Natural killer cell (primary cell): ENCODE measurements at regions of chr6 and their contacts with region 1.

Region 1: DNA sequence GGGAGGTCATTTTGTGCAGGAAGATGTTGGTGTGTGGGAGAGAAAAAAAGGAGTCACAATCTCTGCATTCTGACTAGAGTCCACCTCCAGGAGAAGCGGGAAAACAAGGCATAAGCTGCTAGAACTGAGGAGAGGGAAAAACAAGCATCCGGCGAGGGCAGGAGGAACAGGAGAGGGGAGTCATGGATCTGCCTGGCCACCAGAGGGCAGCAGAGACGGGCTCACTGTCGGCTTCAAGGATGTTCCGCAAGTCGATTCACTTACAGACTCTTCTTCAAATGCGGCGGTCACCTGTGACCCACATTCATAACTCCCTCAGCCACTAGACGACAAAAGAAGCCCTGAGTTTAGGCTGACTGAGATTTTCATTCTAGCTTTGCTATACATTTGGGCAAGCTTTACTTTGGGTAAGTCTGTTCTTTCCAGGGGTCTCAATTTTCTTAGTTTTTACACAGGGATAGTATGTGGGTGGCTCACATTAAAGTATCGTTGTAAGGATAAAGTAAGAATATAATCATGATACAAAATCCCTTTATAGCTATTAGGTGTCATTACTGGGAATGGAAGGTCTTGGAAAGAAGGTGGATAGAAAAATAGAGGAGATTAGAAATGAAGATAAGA is 6.6 kb upstream of the BTNL2 start:
- DNase-seq: peak; percentile 81 to 93
- ATAC-seq: peak; percentile 89 to 92 (median 91)
- H3K4me3 ChIP-seq: no peak overlapping the region
- H3K4me3 Mint-ChIP-seq: no peak overlapping the region
- H3K27ac ChIP-seq: no peak overlapping the region
- H3K27ac Mint-ChIP-seq: no peak overlapping the region
- H3K4me1 ChIP-seq: no peaks in the 10 kb centered on the region
- H3K4me1 Mint-ChIP-seq: peaks cover 11 to 12% of the 10 kb centered on the region in 2 donors
- H3K27me3 ChIP-seq: peaks cover 19% of the 10 kb centered on the region
- H3K27me3 Mint-ChIP-seq: peaks cover 45 to 60% of the 10 kb centered on the region in 2 donors
- CTCF ChIP-seq: peak; percentile 95

Region 2: DNA sequence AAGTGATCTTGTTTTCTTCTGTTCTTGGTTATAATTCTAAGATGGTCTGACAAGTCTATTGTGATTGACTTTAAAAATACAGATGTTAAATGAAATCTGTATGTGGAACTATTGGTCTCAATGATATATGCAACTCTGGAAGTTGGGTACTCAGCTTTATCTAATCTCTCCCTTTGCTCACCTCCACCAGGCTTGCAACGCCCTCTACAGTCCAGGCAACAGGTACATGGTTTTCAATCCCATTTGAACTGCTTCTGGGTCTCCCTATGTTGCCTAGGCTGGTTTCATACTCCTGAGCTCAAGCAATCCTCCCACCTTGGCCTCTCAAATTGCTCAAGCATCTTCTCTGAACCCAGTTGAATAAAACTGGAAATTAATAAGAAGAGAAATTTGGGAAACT is 278.5 kb after region 1 on chr6:
- intact Hi-C with region 1: loop called (anchors 2 kb)
- DNase-seq: peak; percentile 31 to 82
- ATAC-seq: peak in 2 of 3 donors; percentile 74 to 94
- H3K4me3 ChIP-seq: no peak overlapping the region
- H3K4me3 Mint-ChIP-seq: no peak overlapping the region
- H3K27ac ChIP-seq: no peak overlapping the region
- H3K27ac Mint-ChIP-seq: no peak overlapping the region
- H3K4me1 ChIP-seq: peaks cover 4% of the 10 kb centered on the region
- H3K4me1 Mint-ChIP-seq: peaks cover 10% of the 10 kb centered on the region in 2 donors
- H3K27me3 ChIP-seq: no peaks in the 10 kb centered on the region
- H3K27me3 Mint-ChIP-seq: peaks cover 24 to 47% of the 10 kb centered on the region in 2 donors
- CTCF ChIP-seq: peak; percentile 63

Region 3: DNA sequence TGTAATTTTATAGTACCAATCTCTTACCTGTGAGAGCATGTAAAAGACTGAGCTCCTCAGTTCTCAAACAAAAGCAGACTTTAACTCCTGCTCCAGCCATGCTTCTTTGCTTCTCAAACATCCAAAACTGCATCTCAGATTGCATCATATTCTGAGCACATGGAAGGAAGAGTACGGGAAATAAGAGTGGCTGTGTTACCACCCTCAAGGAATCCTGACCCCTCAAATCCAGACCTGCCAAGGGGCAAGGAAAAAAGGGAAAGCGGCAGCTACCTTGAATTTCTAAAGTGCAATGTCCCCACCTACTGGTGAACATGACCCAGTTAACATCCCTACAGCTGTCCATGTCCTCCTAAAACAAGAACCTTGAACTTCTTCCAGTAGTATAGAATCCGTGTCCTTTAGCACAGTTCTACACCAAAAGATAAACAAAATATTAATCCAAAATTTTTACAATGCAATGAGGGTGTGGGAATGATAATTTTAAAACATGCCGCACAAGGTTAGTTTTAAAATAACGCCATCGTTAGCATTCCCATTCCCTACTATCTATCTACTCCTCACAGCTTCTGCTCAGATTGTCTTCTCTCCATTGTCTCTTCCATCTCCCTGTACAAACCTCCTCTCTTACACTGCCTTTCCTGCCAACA is 287.0 kb after region 1 on chr6:
- intact Hi-C with region 1: loop called (anchors 1 kb)
- DNase-seq: peak in 1 of 2 donors; percentile 76
- ATAC-seq: peak; percentile 56 to 75 (median 58)
- H3K4me3 ChIP-seq: no peak overlapping the region
- H3K4me3 Mint-ChIP-seq: no peak overlapping the region
- H3K27ac ChIP-seq: no peak overlapping the region
- H3K27ac Mint-ChIP-seq: no peak overlapping the region
- H3K4me1 ChIP-seq: peaks cover 2% of the 10 kb centered on the region
- H3K4me1 Mint-ChIP-seq: peaks cover 0 to 7% of the 10 kb centered on the region in 2 donors
- H3K27me3 ChIP-seq: peaks cover 8% of the 10 kb centered on the region
- H3K27me3 Mint-ChIP-seq: peaks cover 42 to 60% of the 10 kb centered on the region in 2 donors
- CTCF ChIP-seq: peak; percentile 71

Region 4: GRCh38 chr6:32785781-32786533 is 372.4 kb after region 1 on chr6:
- intact Hi-C with region 1: loop called (anchors 1 kb)
- DNase-seq: peak in 1 of 2 donors; percentile 70
- ATAC-seq: peak; percentile 54 to 71 (median 66)
- H3K4me3 ChIP-seq: no peak overlapping the region
- H3K4me3 Mint-ChIP-seq: no peak overlapping the region
- H3K27ac ChIP-seq: no peak overlapping the region
- H3K27ac Mint-ChIP-seq: no peak overlapping the region
- H3K4me1 ChIP-seq: no peaks in the 10 kb centered on the region
- H3K4me1 Mint-ChIP-seq: no peaks in the 10 kb centered on the region
- H3K27me3 ChIP-seq: peaks cover 8% of the 10 kb centered on the region
- H3K27me3 Mint-ChIP-seq: peaks cover 22 to 56% of the 10 kb centered on the region in 2 donors
- CTCF ChIP-seq: peak; percentile 67

Region 5: DNA sequence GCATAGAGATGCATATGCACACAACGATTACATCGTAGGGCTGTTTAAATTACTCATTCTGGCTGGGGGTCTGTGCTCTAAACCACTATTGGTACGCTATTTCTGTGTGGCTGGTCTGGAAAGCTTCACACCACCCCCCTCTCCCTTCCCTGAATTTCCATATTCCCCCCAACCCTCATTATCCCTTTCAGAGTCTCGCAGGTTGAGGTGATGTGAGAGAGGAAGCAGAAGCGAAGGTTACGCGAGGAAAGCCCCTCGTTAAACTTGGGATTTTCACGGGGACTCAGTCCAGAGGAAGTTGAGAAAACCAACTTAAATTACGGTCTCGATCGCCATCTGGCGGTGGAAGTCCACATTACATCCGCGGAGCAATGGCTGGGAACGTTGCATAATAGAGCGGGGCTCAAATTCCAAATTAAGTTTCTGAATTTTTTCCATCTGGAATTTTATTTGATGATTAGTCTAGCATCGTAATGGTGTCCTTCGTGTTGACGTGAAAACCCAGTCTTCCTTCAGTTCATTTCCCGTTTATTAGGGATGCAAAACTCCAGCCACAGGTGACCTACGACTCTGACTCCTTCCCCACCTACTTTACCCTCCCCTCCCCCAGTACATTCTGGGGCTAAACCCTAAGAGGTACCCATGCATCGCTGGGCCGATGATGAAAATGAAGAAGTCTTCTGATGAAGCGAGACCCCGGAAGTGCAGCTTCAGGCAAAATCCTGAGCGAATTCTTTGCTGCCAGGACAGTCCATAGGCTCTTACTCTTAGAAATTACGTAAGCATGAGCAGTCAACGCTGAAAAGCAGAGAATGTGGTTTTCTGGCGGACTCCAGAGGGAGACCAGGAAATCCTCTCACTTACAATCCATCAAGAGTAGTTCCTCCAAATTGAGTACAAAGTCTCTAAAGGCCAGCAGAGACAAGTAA is 383.6 kb after region 1 on chr6:
- intact Hi-C with region 1: loop called (anchors 1 kb)
- DNase-seq: peak; percentile 79 to 89
- ATAC-seq: peak; percentile 85 to 91 (median 88)
- H3K4me3 ChIP-seq: no peak overlapping the region
- H3K4me3 Mint-ChIP-seq: peak overlapping the region; percentile 18
- H3K27ac ChIP-seq: no peak overlapping the region
- H3K27ac Mint-ChIP-seq: peak overlapping the region in 1 of 2 donors; percentile 56
- H3K4me1 ChIP-seq: peaks cover 12% of the 10 kb centered on the region
- H3K4me1 Mint-ChIP-seq: peaks cover 0 to 11% of the 10 kb centered on the region in 2 donors
- H3K27me3 ChIP-seq: peaks cover 9% of the 10 kb centered on the region
- H3K27me3 Mint-ChIP-seq: peaks cover 43 to 70% of the 10 kb centered on the region in 2 donors
- CTCF ChIP-seq: peak; percentile 94

Region 6: GRCh38 chr6:32868257-32868788 is 454.8 kb after region 1 on chr6:
- intact Hi-C with region 1: loop called (anchors 5 kb)
- DNase-seq: peak; percentile 81 to 95
- ATAC-seq: peak; percentile 89 to 96 (median 93)
- H3K4me3 ChIP-seq: no peak overlapping the region
- H3K4me3 Mint-ChIP-seq: no peak overlapping the region
- H3K27ac ChIP-seq: no peak overlapping the region
- H3K27ac Mint-ChIP-seq: peak overlapping the region in 1 of 2 donors; percentile 7
- H3K4me1 ChIP-seq: peaks cover 9% of the 10 kb centered on the region
- H3K4me1 Mint-ChIP-seq: peaks cover 6 to 7% of the 10 kb centered on the region in 2 donors
- H3K27me3 ChIP-seq: no peaks in the 10 kb centered on the region
- H3K27me3 Mint-ChIP-seq: no peaks in the 10 kb centered on the region
- CTCF ChIP-seq: peak; percentile 88